Body of pancreas (tissue), 4 donors: ENCODE measurements at regions of chr1 and their contacts with region 1.

Region 1: DNA sequence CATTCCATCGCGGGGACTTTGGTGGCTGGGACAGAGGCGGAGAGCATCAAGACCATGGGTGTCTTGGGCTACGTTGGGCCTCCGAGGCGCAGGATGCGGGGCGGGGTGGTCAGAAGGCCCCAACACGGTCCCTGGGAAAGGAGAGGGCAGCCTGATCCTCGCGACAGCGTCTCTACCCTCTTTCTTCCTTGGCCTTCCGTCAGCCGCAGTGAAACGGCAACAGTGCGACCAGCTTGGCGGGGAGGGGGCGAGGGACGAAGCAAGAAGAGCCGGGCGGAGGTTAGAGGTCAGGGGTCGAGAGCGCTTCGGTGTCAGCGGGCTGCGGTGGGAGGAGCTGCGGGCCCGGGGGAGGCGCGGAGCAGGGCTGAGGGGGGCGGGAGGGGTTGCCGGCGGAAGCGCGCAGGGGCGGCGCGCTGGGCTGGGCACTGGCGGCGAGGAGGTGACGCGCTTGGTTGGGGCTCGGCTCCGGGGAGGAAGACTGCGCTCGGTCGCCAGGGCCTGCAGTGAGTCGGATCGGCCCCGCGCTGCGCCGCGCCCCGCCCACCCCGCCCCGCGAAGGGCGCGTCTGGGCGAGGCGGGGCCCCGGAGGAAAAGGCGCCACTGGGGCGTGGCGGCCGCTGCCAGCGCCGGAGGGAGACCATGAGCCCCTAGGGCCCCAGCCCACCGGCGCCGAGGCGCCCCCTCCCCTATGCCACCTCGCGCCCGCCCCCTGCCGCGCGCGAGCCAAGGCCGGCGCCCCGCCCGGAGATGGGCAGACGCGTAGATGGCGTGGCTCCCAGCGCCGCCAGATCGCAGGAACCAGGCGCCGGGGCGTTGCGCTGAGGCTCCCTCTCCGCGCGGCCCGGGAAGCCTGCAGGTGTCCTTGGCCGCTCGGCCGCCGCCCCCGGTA is at the start of gene KCNC4:
- DNase-seq: peak; percentile 91 to 94 (median 94)
- ATAC-seq: peak; percentile 88
- H3K4me3 ChIP-seq: peak within 1 kb of the TSS; percentile 34 to 65
- H3K27ac ChIP-seq: peak within 1 kb of the TSS; percentile 89 to 95 (median 92)
- H3K4me1 ChIP-seq: peaks cover 59% of the 10 kb centered on the region
- H3K27me3 ChIP-seq: no peaks in the 10 kb centered on the region
- CTCF ChIP-seq: peak in 2 of 7 experiments; percentile 12
- POLR2A ChIP-seq: peak; percentile 31 to 60 (median 42)
- total RNA-seq, gene KCNC4: 8.6 to 12.7 TPM

Region 2: DNA sequence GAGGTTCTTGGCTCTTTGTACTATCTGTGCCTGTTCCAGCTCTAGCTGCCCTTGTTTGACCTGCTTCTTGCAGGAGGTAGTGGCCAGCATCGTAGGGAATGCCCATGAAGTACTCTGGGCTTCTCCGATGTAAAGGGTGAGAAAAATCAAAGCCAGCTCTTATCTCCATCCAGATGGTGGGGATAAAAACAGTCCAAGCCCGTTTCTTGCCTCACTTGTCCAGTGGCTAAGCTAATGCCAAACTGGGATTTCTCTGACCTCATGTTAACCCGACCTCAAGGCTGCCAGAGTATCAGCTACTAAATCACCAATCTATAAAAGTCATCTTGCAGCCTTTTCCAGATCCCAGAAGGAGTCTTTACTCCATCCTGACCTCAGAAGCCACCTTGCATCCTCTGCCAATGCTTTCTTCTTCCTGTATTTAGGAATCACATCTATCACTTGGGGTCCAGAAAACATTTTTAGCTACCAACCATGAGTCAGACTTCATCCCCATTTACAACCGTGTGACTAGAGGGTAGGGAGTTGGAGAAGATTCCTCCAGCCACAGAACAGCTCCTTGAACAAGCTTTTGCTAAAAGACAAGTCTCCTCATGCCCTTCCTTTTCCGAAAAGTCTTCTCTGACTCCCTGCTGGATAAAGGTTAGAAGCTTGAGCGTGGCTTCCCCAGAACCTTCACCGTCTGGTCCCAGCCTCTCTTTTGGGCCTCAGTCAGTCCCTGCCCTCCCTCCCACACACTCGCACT is 36.1 kb after region 1 on chr1:
- intact Hi-C with region 1: loop called (anchors 5 kb)
- DNase-seq: no peak
- ATAC-seq: no peak
- H3K4me3 ChIP-seq: no peak overlapping the region
- H3K27ac ChIP-seq: no peak overlapping the region
- H3K4me1 ChIP-seq: peaks cover 12% of the 10 kb centered on the region
- H3K27me3 ChIP-seq: no peaks in the 10 kb centered on the region
- CTCF ChIP-seq: no peak
- POLR2A ChIP-seq: no peak

Region 3: DNA sequence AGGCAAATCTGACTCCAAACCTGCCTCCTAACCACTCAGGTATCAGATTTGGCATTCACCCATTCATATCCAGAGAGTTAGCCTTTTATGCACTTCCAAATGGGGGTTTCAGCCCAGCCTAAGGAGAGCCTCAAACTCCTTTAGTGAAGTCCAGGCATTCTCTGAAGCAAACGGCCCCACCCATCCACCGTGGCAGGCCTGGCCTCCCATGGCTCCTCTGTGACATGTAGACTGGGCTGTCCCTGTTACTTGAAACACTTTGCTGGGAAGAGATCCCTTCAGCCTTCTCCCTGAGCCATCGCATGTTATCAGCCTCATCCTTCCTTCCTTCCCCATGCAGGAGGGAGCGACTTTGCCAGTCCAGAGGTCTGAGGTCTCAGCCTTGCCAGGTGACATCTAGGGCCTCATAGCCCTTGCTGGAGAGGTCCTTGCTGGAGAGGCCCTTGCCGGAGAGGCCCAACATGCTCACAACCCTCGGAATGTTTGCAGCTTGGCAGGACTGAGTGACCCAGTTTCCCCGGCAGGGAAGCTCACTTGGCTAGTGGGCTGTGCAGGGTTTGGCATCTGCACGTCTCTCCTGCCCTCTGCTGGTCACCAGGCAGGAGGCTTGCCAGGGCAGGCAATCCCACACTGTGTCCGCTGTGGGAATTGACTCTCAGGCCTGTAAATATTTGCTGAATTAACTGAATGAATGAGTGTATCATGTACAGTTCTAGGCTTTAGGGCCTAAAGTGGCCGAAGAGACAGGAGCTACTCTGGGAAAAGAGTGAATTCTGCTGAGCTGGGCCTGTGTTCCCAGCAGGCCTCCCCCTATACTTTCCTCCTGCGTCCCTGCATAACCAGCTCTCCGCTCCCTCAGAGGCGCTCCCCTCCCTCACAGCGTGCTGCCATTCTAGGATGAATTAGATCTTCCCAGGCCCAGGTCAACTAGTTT is 102.5 kb after region 1 on chr1:
- intact Hi-C with region 1: loop called (anchors 5 kb)
- DNase-seq: peak; percentile 84 to 88 (median 85)
- ATAC-seq: peak; percentile 92
- H3K4me3 ChIP-seq: no peak overlapping the region
- H3K27ac ChIP-seq: no peak overlapping the region
- H3K4me1 ChIP-seq: peaks cover 13% of the 10 kb centered on the region
- H3K27me3 ChIP-seq: no peaks in the 10 kb centered on the region
- CTCF ChIP-seq: peak; percentile 92 to 98 (median 97)
- POLR2A ChIP-seq: no peak